GM23248 (cell line): ENCODE measurements at regions of chr9 and their contacts with region 1.

Region 1: DNA sequence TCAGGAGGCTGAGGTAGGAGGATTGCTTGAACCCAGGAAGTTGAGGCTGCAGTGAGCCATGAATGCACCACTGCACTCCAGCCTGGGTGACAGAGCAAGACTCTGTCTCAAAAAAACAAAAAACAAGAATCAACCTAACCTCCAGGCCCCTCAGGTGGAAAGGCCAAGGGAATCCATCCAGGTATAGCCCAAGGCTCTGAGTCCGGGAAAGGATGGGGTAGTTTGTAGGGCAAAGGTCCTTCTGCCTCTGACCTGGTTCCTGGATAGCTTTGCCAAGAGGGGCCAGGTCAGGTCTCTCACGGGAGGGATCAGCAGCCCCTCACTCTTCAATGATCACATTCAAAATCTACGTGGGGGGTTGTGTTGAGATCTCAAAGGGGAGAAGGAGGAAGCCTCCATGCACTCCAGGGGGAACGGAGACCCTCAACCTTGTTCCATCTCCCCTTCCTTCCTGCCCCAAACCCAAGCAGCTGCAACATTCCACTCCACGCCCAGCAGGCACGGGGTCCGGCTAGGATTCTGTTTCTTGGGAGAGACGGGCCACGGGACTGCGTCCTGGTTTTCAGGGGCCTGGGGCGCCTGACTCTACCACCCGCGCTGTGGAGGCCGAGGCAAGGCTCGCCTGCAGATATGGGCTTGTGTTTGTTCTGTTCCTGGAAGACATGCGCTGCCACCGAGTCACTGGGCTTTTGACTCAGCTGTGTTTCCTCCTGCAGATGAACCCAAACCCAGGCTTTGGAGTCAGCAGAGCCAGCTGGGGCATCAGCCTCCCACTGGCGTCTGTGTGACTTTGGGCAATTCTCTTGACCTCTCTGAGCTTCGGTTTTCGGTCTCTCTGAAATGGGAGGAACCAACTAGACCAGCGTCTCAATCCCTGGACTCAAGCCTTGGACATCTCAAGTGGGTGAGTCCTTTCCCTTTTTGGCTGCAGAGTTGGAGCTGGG is 35.5 kb downstream of the PLPP7 start:
- DNase-seq: no peak
- H3K4me3 ChIP-seq: no peak overlapping the region
- H3K27ac ChIP-seq: no peak overlapping the region
- H3K4me1 ChIP-seq: peaks cover 10% of the 10 kb centered on the region; the same call in 1 of the 2 replicates
- H3K27me3 ChIP-seq: no peaks in the 10 kb centered on the region

Region 2: GRCh38 chr9:131178382-131178781 is 146.6 kb before region 1 on chr9:
- in situ Hi-C with region 1: loop called (anchors 5 kb)
- DNase-seq: peak; percentile 82
- H3K4me3 ChIP-seq: no peak overlapping the region
- H3K27ac ChIP-seq: peak overlapping the region; percentile 98
- H3K4me1 ChIP-seq: peaks cover 33% of the 10 kb centered on the region
- H3K27me3 ChIP-seq: no peaks in the 10 kb centered on the region

Region 3: DNA sequence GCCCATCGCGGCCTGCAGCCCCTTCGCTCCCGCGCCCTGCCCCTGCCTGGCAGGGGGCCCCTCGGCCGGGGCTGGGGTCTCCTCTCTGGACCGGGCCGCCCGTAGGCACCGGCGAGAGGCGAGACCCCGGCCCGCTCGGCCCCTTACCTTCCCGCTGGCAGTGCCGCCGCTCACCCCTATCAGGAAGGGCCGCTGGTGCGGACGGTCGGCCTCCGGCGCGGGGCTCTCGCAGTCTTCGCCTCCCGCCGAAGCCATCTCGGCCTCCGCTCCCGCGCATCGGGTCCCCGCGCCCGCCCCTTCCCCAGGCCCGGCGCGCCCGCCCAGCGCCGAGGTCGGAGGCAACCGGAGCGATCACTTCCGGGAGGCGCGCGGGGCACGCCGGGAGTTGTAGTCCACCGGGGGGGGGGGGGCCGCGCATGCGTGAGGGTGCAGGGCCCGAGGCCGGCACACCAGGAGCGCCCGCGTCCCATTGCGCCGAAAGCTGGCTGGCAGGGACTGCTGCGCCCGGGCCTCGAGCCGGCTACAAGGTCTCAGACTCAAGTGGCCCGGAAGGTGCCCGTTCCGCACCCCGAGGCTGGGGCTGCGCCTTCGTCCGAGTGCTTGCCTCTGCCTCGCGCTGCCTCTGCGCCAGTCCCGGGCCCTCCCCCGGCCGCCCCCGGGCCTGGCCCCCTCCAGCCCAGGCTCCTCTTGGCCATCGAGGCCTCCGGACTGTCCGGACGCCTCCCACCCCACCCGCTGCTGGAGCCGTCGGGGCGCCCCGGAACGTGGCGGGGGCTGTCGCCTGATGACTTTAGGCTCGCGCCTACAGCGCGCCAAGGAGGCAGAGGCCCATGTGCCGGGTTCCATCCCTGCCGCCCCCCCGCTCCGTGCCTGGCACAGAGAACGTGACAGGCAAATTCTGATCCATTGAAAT is 206.2 kb after region 1 on chr9 and contains the start of gene UCK1:
- in situ Hi-C with region 1: no loop called
- DNase-seq: peak; percentile 90
- H3K4me3 ChIP-seq: peak within 1 kb of the TSS; percentile 83
- H3K27ac ChIP-seq: peak within 1 kb of the TSS; percentile 18; the same call in 1 of the 2 replicates
- H3K4me1 ChIP-seq: peaks cover 4% of the 10 kb centered on the region; the same call in 1 of the 2 replicates
- H3K27me3 ChIP-seq: no peaks in the 10 kb centered on the region
- total RNA-seq, gene UCK1: 22.0 and 31.3 TPM in 2 replicates